ENCODE measurements at regions of chr16 and their contacts with region 1.

Region 1: DNA sequence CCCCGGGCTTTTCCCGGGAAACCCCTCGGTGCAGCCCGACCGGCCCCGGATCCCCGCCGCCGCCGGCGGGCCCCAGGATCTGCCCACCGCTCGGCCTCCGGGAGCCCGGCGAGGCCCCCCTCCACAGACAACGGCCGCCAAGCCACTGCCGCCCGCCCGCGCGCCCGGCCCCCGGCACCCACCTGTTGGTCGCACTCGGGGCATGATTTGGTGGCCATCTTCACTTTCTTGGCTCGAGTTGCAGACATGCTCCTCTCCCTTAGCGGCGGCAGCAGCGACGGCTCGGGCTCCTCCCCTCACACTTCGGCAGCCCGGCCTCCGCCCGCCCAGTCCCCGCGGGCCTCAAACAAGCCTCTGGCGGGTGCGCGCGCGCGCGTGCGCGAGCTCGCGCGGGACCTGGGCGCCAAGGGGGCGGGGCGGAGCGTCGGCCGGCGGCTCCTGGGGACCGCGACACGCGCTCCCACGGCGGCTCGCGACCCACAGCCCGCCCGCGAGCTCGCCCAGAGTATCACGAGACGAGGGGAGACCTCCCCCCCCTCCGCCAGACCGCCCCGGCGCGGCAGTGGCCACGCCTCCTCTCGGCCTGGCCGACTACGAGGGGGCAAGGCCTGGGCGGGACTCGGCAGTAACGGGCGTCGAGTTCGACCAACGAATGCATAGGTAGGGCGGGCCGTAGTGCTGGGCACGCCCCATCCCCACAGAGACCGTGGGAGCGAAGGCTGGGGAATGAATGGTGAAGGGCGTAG is at the start of gene C16orf87:
- DNase-seq: peak; percentile 89
- H3K4me3 Mint-ChIP-seq: peak within 1 kb of the TSS; percentile 98
- H3K27ac Mint-ChIP-seq: peak within 1 kb of the TSS; percentile 99
- H3K4me1 Mint-ChIP-seq: peaks cover 31% of the 10 kb centered on the region
- H3K27me3 Mint-ChIP-seq: peaks cover 11% of the 10 kb centered on the region
- total RNA-seq, gene C16orf87: 20.1 and 24.0 TPM in 2 replicates

Region 2: GRCh38 chr16:46808997-46809396 is 22.1 kb before region 1 on chr16:
- intact Hi-C with region 1: loop called (anchors 1 kb)
- DNase-seq: no peak
- H3K4me3 Mint-ChIP-seq: no peak overlapping the region
- H3K27ac Mint-ChIP-seq: no peak overlapping the region
- H3K4me1 Mint-ChIP-seq: peaks cover 32% of the 10 kb centered on the region
- H3K27me3 Mint-ChIP-seq: no peaks in the 10 kb centered on the region

Region 3: GRCh38 chr16:46883690-46884512 is 52.8 kb after region 1 on chr16 and contains the start of gene GPT2:
- intact Hi-C with region 1: loop called (anchors 1 kb)
- DNase-seq: peak; percentile 80
- H3K4me3 Mint-ChIP-seq: peak within 1 kb of the TSS; percentile 84
- H3K27ac Mint-ChIP-seq: peak within 1 kb of the TSS; percentile 77
- H3K4me1 Mint-ChIP-seq: peaks cover 12% of the 10 kb centered on the region
- H3K27me3 Mint-ChIP-seq: peaks cover 21% of the 10 kb centered on the region
- total RNA-seq, gene GPT2: 12.9 and 13.5 TPM in 2 replicates